ENCODE measurements at regions of chr17 and their contacts with region 1.

Region 1: DNA sequence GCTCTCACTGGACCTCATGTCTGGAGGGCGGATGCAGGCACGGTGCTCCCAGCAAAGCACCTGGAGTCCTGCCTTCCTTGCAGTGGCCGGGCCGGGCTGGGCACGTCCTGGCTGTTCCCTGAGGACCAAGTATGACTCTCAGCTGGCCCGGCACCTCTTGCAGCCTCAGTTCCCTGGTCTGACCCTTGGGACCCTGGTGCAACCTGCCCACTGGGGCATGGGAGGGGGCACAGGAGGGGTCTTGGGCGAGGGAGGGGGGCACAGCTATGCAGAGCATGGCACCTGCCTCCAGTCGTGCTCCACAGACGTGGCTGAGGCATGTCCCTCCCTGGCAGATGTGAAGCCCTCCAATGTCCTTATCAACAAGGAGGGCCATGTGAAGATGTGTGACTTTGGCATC is 19.6 kb downstream of the MAP2K3 start:
- DNase-seq: peak; percentile 27
- CTCF ChIP-seq: no peak

Region 2: GRCh38 chr17:21772321-21772720 is 468.2 kb after region 1 on chr17:
- in situ Hi-C with region 1: loop called (anchors 25 kb)
- DNase-seq: no peak
- CTCF ChIP-seq: no peak

Measured in GM13977 (cell line).